ENCODE measurements at regions of chrX and their contacts with region 1.

Region 1: GRCh38 chrX:41275661-41276609 is 58.0 kb upstream of the DDX3X start:
- DNase-seq: peak; percentile 57
- H3K4me3 Mint-ChIP-seq: peak overlapping the region; percentile 68
- H3K27ac Mint-ChIP-seq: no peak overlapping the region
- H3K4me1 Mint-ChIP-seq: no peaks in the 10 kb centered on the region
- H3K27me3 Mint-ChIP-seq: peaks cover 37% of the 10 kb centered on the region
- CTCF ChIP-seq: peak; percentile 55

Region 2: GRCh38 chrX:41441934-41442823 is 166.2 kb after region 1 on chrX:
- CTCF ChIA-PET with region 1: no interaction called
- POLR2A ChIA-PET with region 1: interaction called, 3 read pairs
- intact Hi-C with region 1: loop called (anchors 5 kb)
- DNase-seq: peak; percentile 92
- H3K4me3 Mint-ChIP-seq: peak overlapping the region; percentile 59
- H3K27ac Mint-ChIP-seq: no peak overlapping the region
- H3K4me1 Mint-ChIP-seq: peaks cover 6% of the 10 kb centered on the region
- H3K27me3 Mint-ChIP-seq: peaks cover 9% of the 10 kb centered on the region
- CTCF ChIP-seq: peak; percentile 34

Region 3: GRCh38 chrX:41734530-41734929 is 458.6 kb after region 1 on chrX:
- CTCF ChIA-PET with region 1: no interaction called
- POLR2A ChIA-PET with region 1: no interaction called
- intact Hi-C with region 1: loop called (anchors 10 kb)
- DNase-seq: peak; percentile 16
- H3K4me3 Mint-ChIP-seq: no peak overlapping the region
- H3K27ac Mint-ChIP-seq: no peak overlapping the region
- H3K4me1 Mint-ChIP-seq: no peaks in the 10 kb centered on the region
- H3K27me3 Mint-ChIP-seq: peaks cover 41% of the 10 kb centered on the region
- CTCF ChIP-seq: peak; percentile 34